Right ventricle myocardium inferior (tissue), 1 donor: ENCODE measurements at regions of chr12 and their contacts with region 1.

Region 1: GRCh38 chr12:56759263-56759908 is 3.7 kb upstream of the HSD17B6 start:
- DNase-seq: no peak
- ATAC-seq: no peak

Region 2: DNA sequence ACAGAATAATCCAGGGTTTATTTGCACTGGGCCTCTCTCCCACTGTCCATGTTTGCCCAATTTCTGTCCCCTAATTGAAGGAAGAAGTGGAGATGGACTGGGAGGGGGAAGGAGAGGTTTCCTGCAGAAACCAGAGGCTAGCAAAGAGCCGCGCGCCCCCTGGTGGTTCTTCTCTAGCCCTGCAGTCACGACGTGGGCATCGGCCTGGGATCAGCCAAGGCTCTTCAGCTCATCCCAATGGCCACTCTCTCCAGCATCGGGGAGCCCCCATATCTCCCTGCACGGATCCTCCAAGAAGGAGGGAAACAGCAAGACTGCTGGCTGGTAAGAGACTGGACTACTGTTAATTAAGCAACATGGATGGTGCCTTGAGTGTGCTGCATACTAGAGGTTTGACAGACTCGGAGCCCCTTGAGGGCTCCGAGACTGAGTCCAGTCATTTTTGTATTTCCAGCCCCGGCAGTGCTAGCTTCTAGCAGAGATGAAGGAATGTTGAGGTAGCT is 228.2 kb after region 1 on chr12:
- intact Hi-C with region 1: loop called (anchors 5 kb)
- DNase-seq: peak; percentile 93
- ATAC-seq: peak; percentile 82

Region 3: GRCh38 chr12:57005980-57006808 is 246.8 kb after region 1 on chr12 and contains the start of gene ZBTB39:
- intact Hi-C with region 1: loop called (anchors 5 kb)
- DNase-seq: peak; percentile 77
- ATAC-seq: peak; percentile 82
- total RNA-seq, gene ZBTB39: 3.3 TPM

Region 4: GRCh38 chr12:57063991-57064685 is 304.8 kb after region 1 on chr12:
- intact Hi-C with region 1: loop called (anchors 5 kb)
- DNase-seq: no peak
- ATAC-seq: no peak

Region 5: GRCh38 chr12:57111031-57111734 is 351.8 kb after region 1 on chr12 and contains the start of gene STAT6:
- intact Hi-C with region 1: loop called (anchors 5 kb)
- DNase-seq: peak; percentile 94
- ATAC-seq: peak; percentile 75
- total RNA-seq, gene STAT6: 58.3 TPM